PC-9 (cell line): ENCODE measurements at regions of chr1 and their contacts with region 1.

Region 1: GRCh38 chr1:119686649-119687048 is 25.1 kb upstream of the PHGDH start:
- DNase-seq: peak; percentile 70 to 99
- H3K4me3 ChIP-seq: peak overlapping the region; percentile 17; the same call in 1 of the 2 replicates
- H3K27ac ChIP-seq: peak overlapping the region; percentile 82
- H3K4me1 ChIP-seq: peaks cover 47% of the 10 kb centered on the region
- H3K27me3 ChIP-seq: no peaks in the 10 kb centered on the region
- CTCF ChIP-seq: no peak

Region 2: DNA sequence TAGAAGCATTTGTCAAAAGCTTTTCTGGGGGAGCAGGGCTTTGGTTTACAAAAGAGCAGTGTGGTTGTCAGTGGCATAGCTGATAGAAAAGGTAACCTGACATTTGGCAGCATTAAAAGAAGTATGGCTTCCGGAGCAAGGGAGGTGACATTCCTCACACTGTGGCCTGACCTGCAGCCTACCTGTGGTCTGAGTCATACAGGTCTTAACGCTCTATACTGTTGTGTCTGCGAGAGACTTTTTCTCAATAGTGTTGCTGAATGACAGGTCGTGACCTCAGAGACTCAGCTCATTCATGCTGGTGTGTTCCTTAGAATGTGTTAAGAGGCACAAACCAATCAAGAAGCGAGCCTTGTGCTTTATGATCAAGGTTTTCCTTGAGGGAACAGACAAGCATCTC is 44.4 kb after region 1 on chr1:
- CTCF ChIA-PET with region 1: no interaction called
- POLR2A ChIA-PET with region 1: no interaction called
- intact Hi-C with region 1: loop called (anchors 1 kb)
- DNase-seq: peak; percentile 78 to 99
- H3K4me3 ChIP-seq: no peak overlapping the region
- H3K27ac ChIP-seq: peak overlapping the region; percentile 37
- H3K4me1 ChIP-seq: peaks cover 50% of the 10 kb centered on the region
- H3K27me3 ChIP-seq: no peaks in the 10 kb centered on the region
- CTCF ChIP-seq: no peak